GM10248 (cell line): ENCODE measurements at regions of chr17 and their contacts with region 1.

Region 1: GRCh38 chr17:60641810-60642220 is 35.8 kb upstream of the BCAS3 start:
- DNase-seq: peak; percentile 58
- CTCF ChIP-seq: peak; percentile 50

Region 2: DNA sequence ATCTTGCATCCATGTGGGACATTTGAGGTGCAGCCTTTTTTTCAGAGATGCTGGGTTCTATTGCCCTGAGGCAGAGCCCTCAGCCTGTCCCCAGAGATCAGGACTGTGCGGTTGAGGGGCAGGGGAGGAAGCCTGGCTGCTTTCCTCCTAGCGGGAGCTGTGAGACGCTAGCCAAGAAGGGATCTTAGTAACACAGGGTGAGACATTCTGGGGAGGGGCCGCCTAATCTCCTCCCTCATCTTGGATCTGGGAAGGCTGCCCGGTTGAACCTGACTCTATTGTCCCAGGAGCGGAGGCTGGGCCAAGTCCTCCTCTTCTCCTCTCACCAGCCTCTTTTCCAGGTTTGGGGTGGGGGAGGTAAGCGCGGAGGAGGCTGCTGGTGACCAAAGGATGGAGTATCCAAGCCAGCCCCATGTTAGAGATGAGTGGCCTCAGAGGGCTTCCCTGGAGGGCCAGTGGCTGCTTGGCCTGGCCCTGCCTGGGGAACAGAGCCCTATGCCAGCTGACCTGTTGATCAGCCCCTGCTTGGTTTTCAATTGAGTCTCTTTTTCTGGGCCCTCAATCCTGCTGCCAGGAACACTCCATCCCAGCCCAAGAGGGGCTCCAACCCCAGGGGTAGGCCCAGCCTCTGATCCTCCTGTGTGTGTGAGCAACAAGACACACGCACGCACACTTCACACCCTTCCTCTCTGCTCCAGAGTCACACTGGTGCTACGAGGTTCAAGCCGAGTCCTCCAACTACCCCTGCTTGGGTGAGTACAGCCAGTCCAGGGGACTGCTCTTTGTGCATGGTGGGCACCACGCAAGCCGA is 487.0 kb before region 1 on chr17:
- CTCF ChIA-PET with region 1: no interaction called
- POLR2A ChIA-PET with region 1: no interaction called
- DNase-seq: no peak
- CTCF ChIP-seq: no peak

Region 3: GRCh38 chr17:60481604-60482003 is 160.2 kb before region 1 on chr17:
- CTCF ChIA-PET with region 1: no interaction called
- POLR2A ChIA-PET with region 1: no interaction called
- DNase-seq: no peak
- CTCF ChIP-seq: no peak

Region 4: GRCh38 chr17:60577147-60577915 is 64.5 kb before region 1 on chr17:
- CTCF ChIA-PET with region 1: interaction called, 12 read pairs
- POLR2A ChIA-PET with region 1: no interaction called
- DNase-seq: peak; percentile 29
- CTCF ChIP-seq: peak; percentile 38

Region 5: DNA sequence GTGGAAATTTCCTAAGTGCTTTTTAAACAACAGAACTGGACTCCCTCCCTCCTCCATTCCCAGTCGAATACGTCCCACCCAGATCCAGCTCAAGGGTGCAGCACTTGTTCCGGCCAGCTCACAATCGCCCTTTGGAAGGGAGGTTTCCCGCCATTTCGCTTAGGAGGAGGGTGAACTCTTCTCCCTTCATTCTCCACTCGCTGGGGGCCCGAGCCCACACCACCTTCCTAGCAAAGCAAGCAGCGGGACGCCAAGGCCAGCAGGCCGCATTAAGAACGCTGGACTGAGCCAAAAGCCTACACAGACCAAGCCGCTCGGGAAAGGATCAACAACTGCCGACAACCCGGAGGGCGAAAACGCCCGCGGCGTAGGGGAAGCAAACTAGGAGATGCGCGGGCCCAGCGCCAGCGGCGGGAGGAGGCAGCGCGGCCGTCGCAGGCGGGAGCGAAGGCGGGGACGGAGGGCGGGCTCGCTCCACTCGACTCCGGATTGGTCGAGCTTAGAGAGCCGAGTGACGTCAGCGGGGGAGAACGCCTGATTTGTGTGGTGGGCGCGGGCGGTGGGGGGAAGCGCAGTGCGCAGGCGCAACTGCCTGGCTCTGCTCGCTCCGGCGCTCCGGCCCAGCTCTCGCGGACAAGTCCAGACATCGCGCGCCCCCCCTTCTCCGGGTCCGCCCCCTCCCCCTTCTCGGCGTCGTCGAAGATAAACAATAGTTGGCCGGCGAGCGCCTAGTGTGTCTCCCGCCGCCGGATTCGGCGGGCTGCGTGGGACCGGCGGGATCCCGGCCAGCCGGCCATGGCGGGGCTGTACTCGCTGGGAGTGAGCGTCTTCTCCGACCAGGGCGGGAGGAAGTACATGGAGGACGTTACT is 42.0 kb before region 1 on chr17 and contains the start of gene PPM1D:
- CTCF ChIA-PET with region 1: interaction called, 34 read pairs
- POLR2A ChIA-PET with region 1: no interaction called
- DNase-seq: peak; percentile 100
- CTCF ChIP-seq: no peak

Region 6: GRCh38 chr17:60613325-60613724 is 28.5 kb before region 1 on chr17:
- CTCF ChIA-PET with region 1: interaction called, 12 read pairs
- POLR2A ChIA-PET with region 1: no interaction called
- DNase-seq: no peak
- CTCF ChIP-seq: no peak

Region 7: DNA sequence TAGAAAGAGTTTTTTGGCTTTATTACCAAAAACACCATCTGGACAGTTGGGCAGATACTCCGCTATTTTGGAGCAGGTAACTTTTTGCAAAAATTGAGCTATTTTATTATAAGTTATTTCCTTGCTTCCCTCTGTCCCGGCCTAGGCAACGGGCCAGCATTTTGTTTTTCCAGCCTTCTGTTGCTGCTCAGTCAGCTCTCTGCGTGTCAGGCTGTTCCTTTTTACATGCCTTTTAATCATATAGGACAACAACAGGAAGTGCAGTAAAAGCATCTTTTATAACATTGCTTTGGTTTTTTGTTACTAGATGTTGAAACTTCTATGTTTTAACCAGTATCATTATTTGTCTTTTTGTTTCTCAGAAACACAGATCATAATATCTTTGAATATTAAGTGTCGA is 11.5 kb before region 1 on chr17:
- CTCF ChIA-PET with region 1: interaction called, 16 read pairs
- POLR2A ChIA-PET with region 1: no interaction called
- DNase-seq: no peak
- CTCF ChIP-seq: no peak

Region 8: DNA sequence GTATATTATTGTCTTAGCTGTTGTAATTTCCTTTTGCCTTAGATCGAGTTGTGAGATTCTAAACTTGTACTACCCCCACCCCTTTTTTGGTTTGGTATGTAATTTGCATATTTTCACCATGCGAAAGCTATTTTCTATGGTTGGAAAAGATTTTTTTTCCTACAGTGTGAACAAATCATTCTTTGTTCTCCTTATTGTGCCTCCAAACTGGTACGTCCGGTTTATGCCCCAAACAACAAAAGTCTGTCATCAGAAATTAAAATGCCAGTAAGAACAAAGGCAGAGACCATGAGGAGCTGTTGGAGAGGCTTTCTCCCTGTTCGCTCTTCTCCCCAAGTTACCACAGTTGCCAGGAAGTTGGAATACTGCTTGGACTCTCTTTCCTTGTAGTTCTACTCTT is 102.0 kb after region 1 on chr17:
- CTCF ChIA-PET with region 1: no interaction called
- POLR2A ChIA-PET with region 1: no interaction called
- DNase-seq: no peak
- CTCF ChIP-seq: no peak